Colonic mucosa (tissue), 4 donors: ENCODE measurements at regions of chr10 and their contacts with region 1.

Region 1: DNA sequence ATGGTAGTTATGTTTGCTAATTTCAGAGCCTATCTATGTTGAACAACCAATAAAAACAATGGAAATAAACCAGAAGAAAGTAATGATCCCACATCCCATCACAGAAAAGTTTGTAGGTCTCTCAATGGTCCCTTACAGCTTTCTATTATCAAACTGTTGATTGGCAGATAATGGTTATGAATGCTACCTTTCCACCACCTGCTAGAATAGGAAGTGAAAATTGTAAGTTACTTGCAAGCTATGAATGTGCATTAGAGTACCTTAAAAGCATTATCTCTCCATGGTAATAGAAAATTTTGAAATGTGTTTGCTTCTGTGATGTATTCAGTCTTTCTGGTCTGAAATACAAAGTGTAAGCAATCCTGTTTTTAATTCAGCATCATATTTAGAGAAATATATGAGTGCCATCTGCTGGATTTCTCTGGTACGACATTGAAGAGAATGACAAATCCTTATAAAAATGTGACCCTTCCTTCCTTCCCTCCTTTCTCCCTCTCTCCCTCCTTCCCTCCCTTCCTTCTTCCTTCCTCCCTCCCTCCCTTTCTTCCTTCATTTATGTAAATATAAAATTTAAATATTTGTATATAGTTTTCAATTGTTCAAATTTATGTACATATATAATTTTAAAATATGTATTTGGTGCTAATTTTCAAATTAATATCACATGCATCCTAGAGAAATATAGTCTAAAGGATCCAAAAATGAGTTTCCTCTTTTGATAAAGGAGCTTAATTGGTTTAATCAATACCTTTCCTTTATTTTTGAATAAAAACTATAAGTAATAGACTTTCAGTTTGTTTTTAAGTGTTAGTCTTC is 41.4 kb upstream of the PNLIPRP3 start:
- DNase-seq: no peak
- H3K4me3 ChIP-seq: no peak overlapping the region
- H3K27ac ChIP-seq: no peak overlapping the region
- H3K4me1 ChIP-seq: no peaks in the 10 kb centered on the region
- H3K27me3 ChIP-seq: no peaks in the 10 kb centered on the region
- CTCF ChIP-seq: peak; percentile 25

Region 2: GRCh38 chr10:115355162-115355760 is 1030.9 kb before region 1 on chr10:
- intact Hi-C with region 1: loop called (anchors 5 kb)
- DNase-seq: peak; percentile 25
- H3K4me3 ChIP-seq: no peak overlapping the region
- H3K27ac ChIP-seq: no peak overlapping the region
- H3K4me1 ChIP-seq: no peaks in the 10 kb centered on the region
- H3K27me3 ChIP-seq: no peaks in the 10 kb centered on the region
- CTCF ChIP-seq: peak; percentile 29

Region 3: GRCh38 chr10:115706026-115706781 is 680.0 kb before region 1 on chr10:
- intact Hi-C with region 1: loop called (anchors 10 kb)
- DNase-seq: no peak
- H3K4me3 ChIP-seq: no peak overlapping the region
- H3K27ac ChIP-seq: no peak overlapping the region
- H3K4me1 ChIP-seq: no peaks in the 10 kb centered on the region
- H3K27me3 ChIP-seq: no peaks in the 10 kb centered on the region
- CTCF ChIP-seq: no peak

Region 4: GRCh38 chr10:115801992-115802391 is 584.2 kb before region 1 on chr10:
- intact Hi-C with region 1: loop called (anchors 10 kb)
- DNase-seq: no peak
- H3K4me3 ChIP-seq: no peak overlapping the region
- H3K27ac ChIP-seq: no peak overlapping the region
- H3K4me1 ChIP-seq: no peaks in the 10 kb centered on the region
- H3K27me3 ChIP-seq: no peaks in the 10 kb centered on the region
- CTCF ChIP-seq: no peak

Region 5: GRCh38 chr10:116278846-116279245 is 107.4 kb before region 1 on chr10:
- intact Hi-C with region 1: no loop called
- DNase-seq: no peak
- H3K4me3 ChIP-seq: no peak overlapping the region
- H3K27ac ChIP-seq: no peak overlapping the region
- H3K4me1 ChIP-seq: no peaks in the 10 kb centered on the region
- H3K27me3 ChIP-seq: peaks cover 20% of the 10 kb centered on the region
- CTCF ChIP-seq: no peak